ENCODE measurements at regions of chr19 and their contacts with region 1.

Region 1: GRCh38 chr19:36772311-36773222 is at the start of gene ZNF850:
- DNase-seq: peak; percentile 63
- ATAC-seq: peak; percentile 96
- H3K4me3 ChIP-seq: peak within 1 kb of the TSS; percentile 93
- H3K27ac ChIP-seq: peak within 1 kb of the TSS; percentile 74
- H3K4me1 ChIP-seq: 0 out of 2 replicates have a peak, but pooled peaks cover 4% of the 10 kb centered on the region
- H3K27me3 ChIP-seq: no peaks in the 10 kb centered on the region
- CTCF ChIP-seq: no peak
- EP300 ChIP-seq: no peak
- POLR2A ChIP-seq: peak; percentile 89
- RAD21 ChIP-seq: no peak
- polyA plus RNA-seq, gene ZNF850: 0.44 to 0.63 TPM

Region 2: DNA sequence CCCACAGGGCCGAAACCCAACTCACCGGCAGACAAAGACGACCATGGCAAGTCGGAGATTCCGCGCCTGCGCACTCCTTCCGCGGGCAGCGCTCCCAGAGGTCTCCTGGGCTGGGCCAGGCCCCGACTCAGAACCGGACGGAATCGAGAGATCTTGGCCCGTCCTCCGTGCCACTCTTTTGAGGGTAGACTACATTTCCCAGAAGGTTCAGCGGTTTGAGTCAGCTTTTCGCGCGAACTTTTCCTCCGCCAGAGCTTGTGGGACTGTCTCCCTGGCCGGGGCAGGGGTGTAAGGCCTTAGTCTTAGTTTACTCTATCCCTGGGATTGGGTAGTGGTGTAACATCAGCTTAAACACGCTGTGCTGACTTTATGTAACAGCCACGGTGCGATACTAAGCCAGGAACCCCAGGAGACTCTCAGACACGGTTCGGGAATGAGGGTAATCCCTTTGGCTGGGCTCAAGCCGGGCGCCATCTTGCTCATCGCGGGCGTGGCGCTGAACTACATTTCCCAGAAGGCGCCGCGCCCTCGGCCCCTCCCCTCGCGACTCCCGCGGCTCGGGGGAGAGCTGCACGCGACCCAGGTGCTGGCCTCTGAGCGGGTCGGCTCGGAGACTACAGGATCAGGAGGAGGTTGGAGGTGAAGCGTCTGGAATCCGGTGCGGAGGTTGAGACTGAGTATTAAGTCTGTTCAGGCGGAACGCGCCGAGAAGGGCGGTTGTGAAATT is 244.2 kb before region 1 on chr19 and contains the start of gene ZNF260:
- CTCF ChIA-PET with region 1: no interaction called
- POLR2A ChIA-PET with region 1: interaction called, 7 read pairs
- RAD21 ChIA-PET with region 1: interaction called, 3 read pairs
- SMC1A ChIA-PET with region 1: no interaction called
- in situ Hi-C with region 1: no loop called
- intact Hi-C with region 1: loop called (anchors 5 kb)
- DNase-seq: peak; percentile 79
- ATAC-seq: peak; percentile 93
- H3K4me3 ChIP-seq: peak within 1 kb of the TSS; percentile 76
- H3K27ac ChIP-seq: peak within 1 kb of the TSS; percentile 83
- H3K4me1 ChIP-seq: no peaks in the 10 kb centered on the region
- H3K27me3 ChIP-seq: no peaks in the 10 kb centered on the region
- CTCF ChIP-seq: no peak
- EP300 ChIP-seq: peak in 1 of 2 experiments; percentile 18; a peak in 1 of 4 replicates
- POLR2A ChIP-seq: peak; percentile 80
- RAD21 ChIP-seq: no peak
- polyA plus RNA-seq, gene ZNF260: 1.9 to 3.5 TPM

Region 3: GRCh38 chr19:36837906-36838783 is 65.6 kb after region 1 on chr19 and contains the start of gene ZNF790:
- CTCF ChIA-PET with region 1: no interaction called
- POLR2A ChIA-PET with region 1: no interaction called
- RAD21 ChIA-PET with region 1: no interaction called
- SMC1A ChIA-PET with region 1: no interaction called
- in situ Hi-C with region 1: no loop called
- intact Hi-C with region 1: loop called (anchors 5 kb)
- DNase-seq: peak; percentile 53
- ATAC-seq: peak; percentile 97
- H3K4me3 ChIP-seq: peak within 1 kb of the TSS; percentile 79
- H3K27ac ChIP-seq: peak within 1 kb of the TSS; percentile 69
- H3K4me1 ChIP-seq: 0 out of 2 replicates have a peak, but pooled peaks cover 3% of the 10 kb centered on the region
- H3K27me3 ChIP-seq: no peaks in the 10 kb centered on the region
- CTCF ChIP-seq: no peak
- EP300 ChIP-seq: no peak
- POLR2A ChIP-seq: peak; percentile 82
- RAD21 ChIP-seq: no peak
- polyA plus RNA-seq, gene ZNF790: 1.6 to 2.5 TPM

Region 4: DNA sequence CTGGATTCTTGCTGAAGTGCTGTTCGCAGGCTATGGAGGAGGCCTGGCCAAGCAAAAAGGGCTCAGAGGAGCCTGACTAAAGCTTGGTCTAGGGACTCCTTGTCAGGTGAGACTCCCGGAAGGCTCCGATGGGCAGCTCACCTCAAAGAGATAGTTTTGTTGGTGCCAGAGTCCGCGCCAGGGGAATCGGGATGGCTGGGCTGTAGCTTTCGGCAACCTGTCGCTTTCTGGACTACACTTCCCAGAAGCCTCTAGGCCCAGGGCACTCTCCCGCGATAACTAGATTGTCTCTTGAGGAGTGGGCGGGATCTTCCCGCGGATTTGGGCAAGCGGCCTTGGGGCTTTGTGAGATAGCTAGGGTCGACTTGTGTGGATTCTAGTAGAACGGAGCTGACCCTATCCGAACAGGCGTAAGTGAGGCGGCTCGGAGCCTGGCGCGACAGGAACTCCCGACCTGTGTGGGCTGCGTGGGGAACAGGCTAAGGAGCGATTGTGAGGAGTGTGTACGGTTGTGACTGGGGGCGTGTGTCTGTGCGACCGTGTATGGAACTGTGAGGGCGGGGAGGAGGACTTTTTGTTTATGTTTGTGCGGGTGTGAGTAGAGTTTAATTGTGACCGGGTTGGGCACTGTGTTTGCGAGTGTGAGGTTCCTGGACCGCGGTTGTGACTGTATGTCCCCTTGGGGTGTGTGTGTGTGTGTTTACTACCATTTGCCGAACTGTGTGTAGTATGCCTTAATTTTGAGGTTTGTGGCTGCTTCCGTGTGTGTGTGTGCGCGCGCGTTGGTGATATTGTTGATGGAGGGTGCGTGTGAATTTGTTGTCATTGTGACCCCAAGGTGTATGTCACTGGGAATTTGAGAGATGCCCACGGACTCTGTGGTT is 78.2 kb after region 1 on chr19 and contains the start of gene ZNF345:
- CTCF ChIA-PET with region 1: no interaction called
- POLR2A ChIA-PET with region 1: interaction called, 7 read pairs
- RAD21 ChIA-PET with region 1: interaction called, 10 read pairs
- SMC1A ChIA-PET with region 1: interaction called, 18 read pairs
- in situ Hi-C with region 1: no loop called
- intact Hi-C with region 1: loop called (anchors 2 kb)
- DNase-seq: peak; percentile 64
- ATAC-seq: peak; percentile 91
- H3K4me3 ChIP-seq: peak within 1 kb of the TSS; percentile 72
- H3K27ac ChIP-seq: peak within 1 kb of the TSS; percentile 75
- H3K4me1 ChIP-seq: peaks cover 4% of the 10 kb centered on the region; the same call in 1 of the 2 replicates
- H3K27me3 ChIP-seq: no peaks in the 10 kb centered on the region
- CTCF ChIP-seq: no peak
- EP300 ChIP-seq: no peak
- POLR2A ChIP-seq: peak; percentile 81
- RAD21 ChIP-seq: no peak
- polyA plus RNA-seq, gene ZNF345: 1.3 to 1.5 TPM